ENCODE measurements at regions of chr13 and their contacts with region 1.

Region 1: GRCh38 chr13:78045916-78046315 is 127.3 kb upstream of the EDNRB start:
- DNase-seq: no peak
- H3K4me3 ChIP-seq: no peak overlapping the region
- CTCF ChIP-seq: no peak

Region 2: GRCh38 chr13:77991003-77991402 is 54.9 kb before region 1 on chr13:
- in situ Hi-C with region 1: loop called (anchors 5 kb)
- DNase-seq: no peak
- H3K4me3 ChIP-seq: no peak overlapping the region
- CTCF ChIP-seq: no peak

Region 3: GRCh38 chr13:78085434-78086225 is 39.7 kb after region 1 on chr13:
- in situ Hi-C with region 1: no loop called
- DNase-seq: no peak
- H3K4me3 ChIP-seq: no peak overlapping the region
- CTCF ChIP-seq: no peak

Region 4: DNA sequence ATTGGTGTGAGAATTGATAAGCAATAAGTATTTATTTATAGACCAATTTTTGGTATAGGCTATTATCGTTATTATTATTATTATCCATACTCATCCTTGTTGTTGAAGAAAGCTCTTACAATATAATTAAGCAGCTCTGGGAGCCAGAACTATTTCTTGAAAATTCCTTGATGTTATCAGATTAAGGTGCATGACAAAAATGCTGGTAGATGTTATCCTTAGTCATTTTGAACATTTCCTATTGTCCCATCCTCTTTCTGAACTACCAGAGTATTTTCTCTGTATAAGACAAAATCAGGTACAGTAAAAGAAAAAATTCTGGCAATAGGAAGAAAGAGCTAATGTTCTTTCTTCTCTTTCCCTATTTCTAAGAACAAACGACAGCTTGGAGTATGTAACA is 227.2 kb after region 1 on chr13:
- in situ Hi-C with region 1: no loop called
- DNase-seq: no peak
- H3K4me3 ChIP-seq: no peak overlapping the region
- CTCF ChIP-seq: no peak